ENCODE measurements at regions of chr12 and their contacts with region 1.

Region 1: GRCh38 chr12:64373193-64373592 is 17.4 kb downstream of the C12orf56 start:
- DNase-seq: no peak
- ATAC-seq: no peak
- H3K4me3 ChIP-seq: no peak overlapping the region
- H3K27ac ChIP-seq: no peak overlapping the region
- H3K4me1 ChIP-seq: no peaks in the 10 kb centered on the region
- H3K27me3 ChIP-seq: no peaks in the 10 kb centered on the region
- CTCF ChIP-seq: no peak
- POLR2A ChIP-seq: no peak
- RAD21 ChIP-seq: no peak

Region 2: DNA sequence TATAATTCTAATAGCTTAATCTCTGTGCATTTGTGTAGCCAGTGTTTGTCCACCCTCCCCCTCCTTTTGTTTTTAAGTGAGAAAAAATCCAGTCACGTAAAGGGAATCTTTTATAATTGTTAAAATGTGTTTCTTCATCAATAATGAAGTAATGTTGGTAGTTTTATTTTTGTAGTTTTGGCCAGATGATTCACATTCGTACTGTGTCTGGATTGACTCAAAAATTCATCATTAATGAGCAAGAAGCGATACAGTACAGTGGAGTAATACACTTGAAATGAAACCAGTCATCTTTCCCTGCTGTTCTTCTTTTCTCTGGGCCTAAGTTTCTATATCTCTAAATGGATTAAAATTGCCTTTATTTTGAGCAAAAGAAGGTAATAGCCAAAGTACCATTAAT is 442.2 kb before region 1 on chr12:
- CTCF ChIA-PET with region 1: no interaction called
- POLR2A ChIA-PET with region 1: no interaction called
- dilution Hi-C with region 1: no loop called
- in situ Hi-C with region 1: no loop called
- intact Hi-C with region 1: no loop called
- DNase-seq: peak; percentile 72
- ATAC-seq: peak; percentile 80
- H3K4me3 ChIP-seq: no peak overlapping the region
- H3K27ac ChIP-seq: peak overlapping the region; percentile 40; the same call in 1 of the 2 replicates
- H3K4me1 ChIP-seq: peaks cover 10% of the 10 kb centered on the region; the same call in 1 of the 2 replicates
- H3K27me3 ChIP-seq: no peaks in the 10 kb centered on the region
- CTCF ChIP-seq: no peak
- POLR2A ChIP-seq: no peak
- RAD21 ChIP-seq: no peak

Region 3: GRCh38 chr12:63941166-63941800 is 431.9 kb before region 1 on chr12:
- CTCF ChIA-PET with region 1: no interaction called
- POLR2A ChIA-PET with region 1: interaction called, 12 read pairs
- dilution Hi-C with region 1: no loop called
- in situ Hi-C with region 1: no loop called
- intact Hi-C with region 1: no loop called
- DNase-seq: no peak
- ATAC-seq: no peak
- H3K4me3 ChIP-seq: no peak overlapping the region
- H3K27ac ChIP-seq: no peak overlapping the region
- H3K4me1 ChIP-seq: peaks cover 13% of the 10 kb centered on the region
- H3K27me3 ChIP-seq: no peaks in the 10 kb centered on the region
- CTCF ChIP-seq: no peak
- POLR2A ChIP-seq: no peak
- RAD21 ChIP-seq: no peak

Region 4: DNA sequence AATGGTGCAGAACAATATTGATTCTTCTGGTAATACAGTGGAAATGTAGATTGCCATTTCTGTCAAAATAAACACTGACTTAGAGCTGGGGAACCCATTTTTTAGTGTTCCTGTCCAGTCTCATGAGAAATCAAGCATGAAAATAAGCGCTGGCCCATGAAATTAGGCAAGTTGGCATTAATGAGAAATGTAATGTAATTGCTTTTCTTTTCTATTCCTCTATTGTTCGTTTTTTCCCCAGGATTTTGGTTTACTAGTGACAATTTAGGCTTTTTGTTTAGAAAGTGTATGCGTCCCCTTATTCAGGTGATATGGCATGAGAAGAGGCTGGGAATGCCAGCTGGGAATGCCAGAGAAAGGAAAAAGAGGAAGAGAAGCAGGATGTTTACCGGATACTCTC is 86.7 kb before region 1 on chr12:
- CTCF ChIA-PET with region 1: no interaction called
- POLR2A ChIA-PET with region 1: no interaction called
- dilution Hi-C with region 1: no loop called
- in situ Hi-C with region 1: no loop called
- intact Hi-C with region 1: no loop called
- DNase-seq: no peak
- ATAC-seq: no peak
- H3K4me3 ChIP-seq: no peak overlapping the region
- H3K27ac ChIP-seq: no peak overlapping the region
- H3K4me1 ChIP-seq: no peaks in the 10 kb centered on the region
- H3K27me3 ChIP-seq: no peaks in the 10 kb centered on the region; the same call in 1 of the 2 replicates
- CTCF ChIP-seq: no peak
- POLR2A ChIP-seq: no peak
- RAD21 ChIP-seq: no peak

Region 5: DNA sequence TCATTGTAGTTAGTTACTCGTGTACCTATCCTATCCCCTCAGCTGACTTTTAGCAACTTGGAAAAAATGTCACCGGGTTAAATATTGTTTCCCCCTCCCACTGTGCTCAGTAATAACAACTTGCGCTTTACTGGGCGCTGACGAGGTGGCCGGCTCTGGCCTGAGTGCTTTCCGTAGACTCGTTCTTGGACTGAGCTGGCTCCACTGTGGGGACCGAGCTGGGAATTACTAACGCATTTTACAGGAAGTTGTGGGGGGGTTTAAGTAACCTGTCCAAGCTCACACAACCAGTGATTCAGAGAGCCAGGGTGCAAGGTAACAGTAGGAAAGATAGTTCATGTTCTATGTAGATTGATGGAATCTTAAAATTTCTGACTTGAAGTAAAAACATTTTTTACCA is 68.6 kb before region 1 on chr12:
- CTCF ChIA-PET with region 1: no interaction called
- POLR2A ChIA-PET with region 1: no interaction called
- dilution Hi-C with region 1: no loop called
- in situ Hi-C with region 1: no loop called
- intact Hi-C with region 1: loop called (anchors 10 kb)
- DNase-seq: no peak
- ATAC-seq: no peak
- H3K4me3 ChIP-seq: no peak overlapping the region
- H3K27ac ChIP-seq: no peak overlapping the region
- H3K4me1 ChIP-seq: no peaks in the 10 kb centered on the region
- H3K27me3 ChIP-seq: peaks cover 9% of the 10 kb centered on the region
- CTCF ChIP-seq: no peak
- POLR2A ChIP-seq: no peak
- RAD21 ChIP-seq: no peak

Region 6: DNA sequence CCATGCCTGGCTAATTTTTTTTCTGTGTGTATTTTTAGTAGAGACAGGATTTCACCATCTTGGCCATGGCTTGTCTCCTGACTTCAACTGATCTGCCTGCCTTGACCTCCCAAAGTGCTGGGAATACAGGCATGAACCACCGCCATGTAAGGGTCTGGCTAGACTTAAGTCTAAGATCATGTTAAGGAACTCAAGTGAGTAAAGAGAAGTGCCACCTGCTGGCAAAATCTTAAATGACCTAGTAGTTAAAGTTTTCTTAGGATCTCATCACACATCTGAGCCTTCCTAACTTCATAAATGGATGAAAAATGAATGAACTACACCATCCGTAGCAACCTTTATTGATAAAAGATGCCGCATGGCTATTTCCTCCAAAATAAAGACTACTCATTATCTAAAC is 19.0 kb after region 1 on chr12:
- CTCF ChIA-PET with region 1: no interaction called
- POLR2A ChIA-PET with region 1: no interaction called
- dilution Hi-C with region 1: no loop called
- in situ Hi-C with region 1: no loop called
- intact Hi-C with region 1: no loop called
- DNase-seq: peak; percentile 56
- ATAC-seq: peak; percentile 73; the same call in 1 of the 2 replicates
- H3K4me3 ChIP-seq: no peak overlapping the region
- H3K27ac ChIP-seq: no peak overlapping the region
- H3K4me1 ChIP-seq: no peaks in the 10 kb centered on the region
- H3K27me3 ChIP-seq: peaks cover 6% of the 10 kb centered on the region; the same call in 1 of the 2 replicates
- CTCF ChIP-seq: peak; percentile 52
- POLR2A ChIP-seq: no peak
- RAD21 ChIP-seq: peak; percentile 37; the same call in 1 of the 2 replicates

Measured in IMR-90 (cell line).